Stomach (tissue), 19 donors: ENCODE measurements at regions of chr1 and their contacts with region 1.

Region 1: GRCh38 chr1:27044613-27045151 is 32.0 kb upstream of the TENT5B start:
- DNase-seq: peak; percentile 94
- H3K4me3 ChIP-seq: peak overlapping the region in 1 of 4 donors; percentile 22
- H3K27ac ChIP-seq: no peak overlapping the region
- H3K4me1 ChIP-seq: peaks cover 4 to 24% (median 8%) of the 10 kb centered on the region in 4 donors
- H3K27me3 ChIP-seq: no peaks in the 10 kb centered on the region
- CTCF ChIP-seq: peak in 6 of 7 experiments; percentile 68 to 99 (median 99)
- EP300 ChIP-seq: no peak
- POLR2A ChIP-seq: no peak

Region 2: GRCh38 chr1:26864610-26865527 is 179.8 kb before region 1 on chr1:
- intact Hi-C with region 1: no loop called
- DNase-seq: peak; percentile 97 to 99
- H3K4me3 ChIP-seq: peak overlapping the region; percentile 58 to 65 (median 61)
- H3K27ac ChIP-seq: peak overlapping the region; percentile 92 to 99 (median 96)
- H3K4me1 ChIP-seq: peaks cover 16 to 36% (median 26%) of the 10 kb centered on the region in 4 donors
- H3K27me3 ChIP-seq: no peaks in the 10 kb centered on the region
- CTCF ChIP-seq: no peak
- EP300 ChIP-seq: no peak
- POLR2A ChIP-seq: peak in 1 of 4 donors; percentile 85

Region 3: GRCh38 chr1:26889551-26890466 is 154.9 kb before region 1 on chr1 and contains the start of gene GPN2:
- intact Hi-C with region 1: no loop called
- DNase-seq: peak; percentile 83 to 96
- H3K4me3 ChIP-seq: peak within 1 kb of the TSS; percentile 73 to 95 (median 86)
- H3K27ac ChIP-seq: peak within 1 kb of the TSS; percentile 80 to 96 (median 91)
- H3K4me1 ChIP-seq: peaks cover 20 to 36% (median 29%) of the 10 kb centered on the region in 4 donors
- H3K27me3 ChIP-seq: no peaks in the 10 kb centered on the region
- CTCF ChIP-seq: no peak
- EP300 ChIP-seq: no peak
- POLR2A ChIP-seq: no peak
- total RNA-seq, gene GPN2: 5.4 to 66.3 (median 9.9) TPM

Region 4: GRCh38 chr1:26907071-26907917 is 137.4 kb before region 1 on chr1:
- intact Hi-C with region 1: no loop called
- DNase-seq: peak; percentile 59 to 63
- H3K4me3 ChIP-seq: no peak overlapping the region
- H3K27ac ChIP-seq: peak overlapping the region in 2 of 5 donors; percentile 20 to 22
- H3K4me1 ChIP-seq: peaks cover 13 to 26% (median 17%) of the 10 kb centered on the region in 4 donors
- H3K27me3 ChIP-seq: no peaks in the 10 kb centered on the region
- CTCF ChIP-seq: no peak
- EP300 ChIP-seq: no peak
- POLR2A ChIP-seq: no peak

Region 5: GRCh38 chr1:26993237-26994019 is 51.3 kb before region 1 on chr1 and contains the start of gene TRNP1:
- intact Hi-C with region 1: loop called (anchors 10 kb)
- DNase-seq: peak; percentile 83 to 94
- H3K4me3 ChIP-seq: peak within 1 kb of the TSS; percentile 82 to 94 (median 88)
- H3K27ac ChIP-seq: peak within 1 kb of the TSS; percentile 85 to 90 (median 86)
- H3K4me1 ChIP-seq: peaks cover 36 to 81% (median 60%) of the 10 kb centered on the region in 4 donors
- H3K27me3 ChIP-seq: peaks cover 0 to 52% (median 17%) of the 10 kb centered on the region in 3 donors
- CTCF ChIP-seq: no peak
- EP300 ChIP-seq: no peak
- POLR2A ChIP-seq: peak in 1 of 4 donors; percentile 59
- total RNA-seq, gene TRNP1: 1.7 to 188 (median 40.0) TPM

Region 6: DNA sequence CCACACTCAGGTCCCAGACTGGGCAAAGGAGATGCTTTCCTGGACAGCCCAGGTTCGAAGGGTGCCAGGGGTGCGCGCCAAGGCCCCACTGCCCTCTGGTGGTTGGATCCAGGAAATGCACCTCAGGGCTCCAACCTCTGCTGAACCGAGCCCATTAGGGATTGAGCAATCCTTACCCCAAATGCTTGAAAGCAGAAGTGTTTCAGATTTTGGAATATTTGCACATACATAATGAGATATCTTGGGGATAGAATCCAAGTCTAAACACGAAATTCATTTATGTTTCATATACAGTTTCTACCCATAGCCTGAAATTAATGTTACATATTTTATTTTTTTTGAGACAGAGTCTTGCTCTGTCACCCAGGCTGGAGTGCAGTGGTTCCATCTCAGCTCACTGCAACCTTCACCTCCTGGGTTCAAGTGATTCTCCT is 52.8 kb after region 1 on chr1:
- intact Hi-C with region 1: loop called (anchors 5 kb)
- DNase-seq: peak; percentile 82 to 92
- H3K4me3 ChIP-seq: no peak overlapping the region
- H3K27ac ChIP-seq: no peak overlapping the region
- H3K4me1 ChIP-seq: peaks cover 23 to 55% (median 37%) of the 10 kb centered on the region in 4 donors
- H3K27me3 ChIP-seq: no peaks in the 10 kb centered on the region
- CTCF ChIP-seq: peak in 6 of 7 experiments; percentile 67 to 99 (median 98)
- EP300 ChIP-seq: no peak
- POLR2A ChIP-seq: no peak